H1 (cell line): ENCODE measurements at regions of chr2 and their contacts with region 1.

Region 1: DNA sequence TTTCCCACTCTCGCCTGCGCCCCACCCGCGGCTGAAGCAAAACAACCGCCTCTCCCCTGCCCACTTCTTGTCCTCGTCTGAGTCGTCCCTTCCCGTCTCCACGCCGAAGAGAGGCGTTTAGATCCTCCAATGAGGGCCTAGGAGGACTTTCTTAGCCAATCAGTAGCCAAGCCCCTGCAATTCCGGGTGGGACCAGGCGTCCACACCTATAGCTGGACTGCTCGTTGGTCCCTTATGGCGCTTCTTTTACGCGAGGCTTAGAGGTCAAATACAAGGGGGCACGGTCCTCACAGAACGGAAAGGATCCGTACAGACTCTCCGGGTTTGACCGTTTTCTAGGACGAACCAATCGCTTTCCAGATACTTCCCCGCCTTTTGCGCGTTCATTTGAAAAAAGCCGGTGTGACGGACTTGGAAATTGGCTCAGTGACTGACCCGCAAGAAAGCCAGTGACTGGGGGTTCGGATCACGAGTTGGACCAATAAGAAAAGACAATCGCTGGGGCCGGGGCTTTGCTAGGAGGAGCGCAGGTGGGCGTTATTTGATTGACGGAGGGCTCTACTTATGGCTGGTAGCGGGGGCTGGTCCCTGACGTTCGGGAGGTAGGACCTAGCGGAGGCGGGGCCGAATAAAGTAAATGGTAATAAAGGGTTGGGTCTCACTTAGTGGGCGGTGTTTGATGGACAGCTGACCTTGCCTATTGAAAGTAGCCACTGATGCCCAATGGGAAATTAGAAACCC is 565 bp upstream of the PPM1B start:
- DNase-seq: peak; percentile 90 to 92
- H3K4me3 ChIP-seq: peak overlapping the region; percentile 44 to 80 (median 65)
- H3K27ac ChIP-seq: peak overlapping the region; percentile 83
- H3K4me1 ChIP-seq: peaks cover 0 to 5% (median 3%) of the 10 kb centered on the region in 4 experiments; a peak in 5 of 7 replicates
- H3K27me3 ChIP-seq: no peaks in the 10 kb centered on the region
- CTCF ChIP-seq: no peak
- EP300 ChIP-seq: peak in 1 of 2 experiments; percentile 51; a peak in 1 of 3 replicates
- POLR2A ChIP-seq: peak; percentile 50 to 60; a peak in 2 of 3 replicates
- RAD21 ChIP-seq: no peak

Region 2: GRCh38 chr2:43960921-43961320 is 207.2 kb before region 1 on chr2:
- CTCF ChIA-PET with region 1: no interaction called
- POLR2A ChIA-PET with region 1: no interaction called
- DNase-seq: no peak
- H3K4me3 ChIP-seq: no peak overlapping the region
- H3K27ac ChIP-seq: no peak overlapping the region
- H3K4me1 ChIP-seq: no peaks in the 10 kb centered on the region
- H3K27me3 ChIP-seq: no peaks in the 10 kb centered on the region
- CTCF ChIP-seq: no peak
- EP300 ChIP-seq: no peak
- POLR2A ChIP-seq: no peak
- RAD21 ChIP-seq: no peak

Region 3: DNA sequence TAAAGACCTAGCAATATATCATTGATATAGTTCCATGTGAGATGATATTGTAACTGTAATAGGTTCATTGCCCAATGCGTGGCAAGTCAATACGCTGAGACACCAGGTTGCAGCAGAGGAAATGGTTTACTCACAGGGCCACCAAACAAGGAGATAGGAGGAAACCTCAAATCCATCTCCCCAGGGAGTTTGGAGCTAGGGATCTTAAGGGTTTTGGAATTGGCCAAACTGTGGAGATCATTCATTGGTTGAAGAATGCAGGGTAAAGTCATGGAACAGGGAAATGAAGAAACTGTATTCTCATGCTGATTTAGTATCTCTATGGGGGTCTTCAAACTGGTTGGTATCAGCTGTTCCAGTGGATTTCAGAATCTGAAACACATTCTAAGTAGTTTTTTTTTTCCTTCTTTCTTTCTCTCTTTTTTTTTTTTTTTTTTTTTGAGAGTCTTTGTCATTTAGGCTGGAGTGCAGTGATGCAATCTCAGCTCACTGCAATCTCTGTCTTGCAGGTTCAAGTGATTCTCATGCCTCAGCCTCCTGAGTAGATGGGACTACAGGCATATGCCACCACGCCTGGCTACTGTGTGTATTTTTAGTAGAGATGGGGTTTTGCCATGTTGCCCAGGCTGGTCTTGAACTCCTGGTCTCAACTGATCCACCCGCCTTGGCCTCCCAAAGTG is 30.1 kb before region 1 on chr2:
- CTCF ChIA-PET with region 1: interaction called, 5 read pairs
- POLR2A ChIA-PET with region 1: interaction called, 20 read pairs
- DNase-seq: peak in 1 of 2 experiments; percentile 70
- H3K4me3 ChIP-seq: peak overlapping the region in 1 of 4 experiments; percentile 7; a peak in 2 of 8 replicates
- H3K27ac ChIP-seq: peak overlapping the region; percentile 69; the same call in 1 of the 2 replicates
- H3K4me1 ChIP-seq: peaks cover 5 to 24% (median 20%) of the 10 kb centered on the region in 4 experiments; a peak in 6 of 7 replicates
- H3K27me3 ChIP-seq: no peaks in the 10 kb centered on the region
- CTCF ChIP-seq: no peak
- EP300 ChIP-seq: no peak
- POLR2A ChIP-seq: peak in 1 of 2 experiments; percentile 52; a peak in 2 of 3 replicates
- RAD21 ChIP-seq: no peak

Region 4: DNA sequence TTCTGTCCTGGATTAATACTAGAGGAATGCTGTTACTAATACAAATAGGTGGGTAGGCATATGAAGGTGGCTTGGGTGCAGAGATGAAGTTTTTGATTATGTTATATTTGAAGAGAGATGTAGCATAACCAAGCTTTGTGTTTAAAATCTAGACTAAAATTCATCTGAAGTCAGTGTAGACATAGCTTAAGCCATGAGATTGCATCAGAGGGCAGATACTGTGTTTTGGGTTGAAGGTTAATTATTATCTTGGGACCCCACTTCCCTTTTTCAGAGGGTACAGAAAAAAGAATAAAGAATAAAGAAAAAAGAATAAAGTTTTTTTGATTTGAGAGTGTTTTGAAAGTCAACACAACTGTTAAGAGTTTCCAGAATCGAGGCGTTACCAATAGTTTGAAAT is 13.5 kb after region 1 on chr2:
- CTCF ChIA-PET with region 1: interaction called, 3 read pairs
- POLR2A ChIA-PET with region 1: interaction called, 53 read pairs
- DNase-seq: no peak
- H3K4me3 ChIP-seq: no peak overlapping the region
- H3K27ac ChIP-seq: no peak overlapping the region
- H3K4me1 ChIP-seq: peaks cover 0 to 11% (median 6%) of the 10 kb centered on the region in 4 experiments; a peak in 3 of 7 replicates
- H3K27me3 ChIP-seq: no peaks in the 10 kb centered on the region
- CTCF ChIP-seq: no peak
- EP300 ChIP-seq: no peak
- POLR2A ChIP-seq: no peak
- RAD21 ChIP-seq: no peak